Prostate gland (tissue), 2 donors: ENCODE measurements at regions of chr7 and their contacts with region 1.

Region 1: GRCh38 chr7:33757562-33758165 is 147.7 kb upstream of the BMPER start:
- DNase-seq: peak; percentile 25
- H3K4me3 ChIP-seq: no peak overlapping the region
- H3K27ac ChIP-seq: no peak overlapping the region
- H3K4me1 ChIP-seq: no peaks in the 10 kb centered on the region
- H3K27me3 ChIP-seq: no peaks in the 10 kb centered on the region
- CTCF ChIP-seq: peak in 3 of 4 experiments; percentile 63 to 90 (median 63)
- POLR2A ChIP-seq: no peak

Region 2: GRCh38 chr7:33669251-33669670 is 88.4 kb before region 1 on chr7:
- intact Hi-C with region 1: no loop called
- DNase-seq: no peak
- H3K4me3 ChIP-seq: no peak overlapping the region
- H3K27ac ChIP-seq: no peak overlapping the region
- H3K4me1 ChIP-seq: no peaks in the 10 kb centered on the region
- H3K27me3 ChIP-seq: no peaks in the 10 kb centered on the region
- CTCF ChIP-seq: no peak
- POLR2A ChIP-seq: no peak

Region 3: DNA sequence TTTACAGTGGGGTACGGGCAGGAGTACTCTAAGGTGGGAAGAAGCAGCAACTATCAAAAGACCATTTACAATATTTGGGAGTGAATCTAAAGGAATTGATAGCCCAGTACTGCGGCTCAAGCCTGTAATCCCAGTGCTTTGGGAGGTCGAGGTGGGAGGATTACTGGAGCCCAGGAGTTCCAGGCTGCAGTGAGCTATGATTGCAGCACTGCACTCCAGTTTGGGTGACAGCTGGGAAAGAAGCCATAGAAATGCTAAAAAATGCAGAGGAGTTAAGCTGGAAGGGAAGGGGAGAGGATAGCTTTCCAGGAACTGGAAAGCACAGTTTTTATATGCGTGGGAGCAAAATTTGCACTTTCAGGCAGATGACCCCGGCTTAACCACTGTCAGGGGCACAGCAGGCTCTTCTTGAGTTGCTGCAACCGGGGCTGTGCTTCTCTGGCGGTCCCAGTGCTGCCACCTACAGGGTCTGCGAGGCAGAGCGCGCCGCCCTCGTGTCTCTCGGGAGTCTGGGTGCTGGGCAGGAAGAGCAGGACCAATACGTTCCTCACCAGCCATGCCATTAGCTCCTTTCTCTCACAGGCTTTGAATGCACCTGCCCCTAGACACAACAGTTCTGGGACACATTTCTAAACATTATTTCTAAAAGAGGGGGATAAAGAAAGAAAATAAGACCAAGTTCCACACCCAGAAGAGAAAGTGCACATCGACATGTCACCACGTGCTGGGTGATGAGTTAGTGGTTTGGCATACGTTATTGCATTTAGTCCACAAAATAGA is 137.6 kb after region 1 on chr7:
- intact Hi-C with region 1: loop called (anchors 2 kb)
- DNase-seq: peak; percentile 83
- H3K4me3 ChIP-seq: no peak overlapping the region
- H3K27ac ChIP-seq: no peak overlapping the region
- H3K4me1 ChIP-seq: no peaks in the 10 kb centered on the region
- H3K27me3 ChIP-seq: no peaks in the 10 kb centered on the region
- CTCF ChIP-seq: peak; percentile 61 to 88 (median 79)
- POLR2A ChIP-seq: no peak

Region 4: GRCh38 chr7:34191771-34192479 is 434.3 kb after region 1 on chr7:
- intact Hi-C with region 1: no loop called
- DNase-seq: no peak
- H3K4me3 ChIP-seq: no peak overlapping the region
- H3K27ac ChIP-seq: no peak overlapping the region
- H3K4me1 ChIP-seq: peaks cover 6% of the 10 kb centered on the region
- H3K27me3 ChIP-seq: no peaks in the 10 kb centered on the region
- CTCF ChIP-seq: no peak
- POLR2A ChIP-seq: no peak